ENCODE measurements at regions of chr3 and their contacts with region 1.

Region 1: GRCh38 chr3:51955893-51956770 is 951 bp downstream of the GPR62 start:
- DNase-seq: peak in 5 of 10 donors; percentile 56 to 73 (median 63)
- H3K4me3 ChIP-seq: peak overlapping the region; percentile 11 to 82 (median 64)
- H3K27ac ChIP-seq: peak overlapping the region; percentile 76 to 100 (median 98)
- H3K27me3 ChIP-seq: no peaks in the 10 kb centered on the region
- CTCF ChIP-seq: peak in 47 of 56 donors; percentile 7 to 63 (median 47)

Region 2: DNA sequence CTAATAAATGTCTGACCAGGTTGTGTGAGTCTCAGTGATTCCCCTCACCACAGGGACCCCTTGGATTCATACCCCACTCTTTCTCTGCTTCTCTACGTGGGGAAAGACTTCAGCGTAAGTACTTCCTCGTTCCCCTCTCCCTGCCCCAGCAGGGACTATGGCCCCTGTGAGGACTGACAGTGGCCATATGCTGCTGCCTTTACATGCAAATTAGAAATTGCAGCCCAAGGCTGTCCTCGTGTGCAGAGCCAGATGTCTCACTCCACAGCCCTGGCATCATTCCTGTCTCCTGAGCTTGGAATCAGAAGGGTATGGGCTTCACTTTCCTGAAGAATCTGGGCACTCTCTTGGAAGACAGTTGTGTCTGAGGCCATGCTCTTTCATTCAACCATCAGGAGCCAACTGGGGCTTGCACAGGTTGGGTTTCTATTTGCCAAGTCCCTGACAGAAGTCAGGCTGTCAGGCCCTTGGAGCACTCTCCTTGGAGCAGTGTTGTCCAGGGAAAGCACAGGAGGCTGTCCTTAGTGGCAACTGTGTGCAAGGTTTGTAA is 125.2 kb before region 1 on chr3:
- intact Hi-C with region 1: no loop called
- DNase-seq: peak in 1 of 10 donors; percentile 7
- H3K4me3 ChIP-seq: no peak overlapping the region
- H3K27ac ChIP-seq: no peak overlapping the region
- H3K27me3 ChIP-seq: peaks cover 0 to 4% (median 0%) of the 10 kb centered on the region in 45 donors
- CTCF ChIP-seq: no peak

Region 3: GRCh38 chr3:51974963-51975851 is 19.1 kb after region 1 on chr3 and contains the start of gene ABHD14A:
- intact Hi-C with region 1: loop called in 1 of 2 experiments (anchors 2 kb)
- DNase-seq: peak in 9 of 10 donors; percentile 61 to 87 (median 73)
- H3K4me3 ChIP-seq: peak within 1 kb of the TSS; percentile 49 to 91 (median 79)
- H3K27ac ChIP-seq: peak within 1 kb of the TSS; percentile 78 to 100 (median 96)
- H3K27me3 ChIP-seq: no peaks in the 10 kb centered on the region
- CTCF ChIP-seq: peak in 34 of 56 donors; percentile 10 to 52 (median 26)
- total RNA-seq, gene ABHD14A: 31.4 to 85.8 (median 60.7) TPM

Region 4: DNA sequence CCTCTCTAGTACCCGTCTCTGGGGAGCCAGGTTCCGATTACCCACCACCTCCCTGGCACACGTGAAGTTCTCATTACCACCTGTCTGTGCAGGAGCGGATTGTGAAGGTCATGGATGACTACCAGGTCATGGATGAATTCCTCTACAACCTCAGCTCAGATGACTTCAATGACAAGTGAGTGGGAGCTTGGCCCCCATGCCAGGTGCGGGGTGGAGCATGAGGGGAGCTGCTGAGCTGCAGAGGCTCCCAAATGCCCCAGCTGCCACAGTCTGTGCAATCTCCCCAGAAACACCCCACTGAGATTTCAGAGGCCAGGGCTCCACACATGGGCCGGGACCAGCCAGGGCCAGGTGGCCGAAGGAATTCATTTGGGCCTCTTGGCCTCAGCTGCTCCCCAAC is 394.3 kb after region 1 on chr3:
- intact Hi-C with region 1: no loop called
- DNase-seq: no peak
- H3K4me3 ChIP-seq: no peak overlapping the region
- H3K27ac ChIP-seq: no peak overlapping the region
- H3K27me3 ChIP-seq: no peaks in the 10 kb centered on the region
- CTCF ChIP-seq: no peak

Region 5: GRCh38 chr3:52552089-52552488 is 596.0 kb after region 1 on chr3:
- intact Hi-C with region 1: no loop called
- DNase-seq: no peak
- H3K4me3 ChIP-seq: no peak overlapping the region
- H3K27ac ChIP-seq: peak overlapping the region in 21 of 59 donors; percentile 2 to 50 (median 27)
- H3K27me3 ChIP-seq: no peaks in the 10 kb centered on the region
- CTCF ChIP-seq: no peak

Measured in dorsolateral prefrontal cortex (tissue), 120 donors.